Activated CD8-positive, alpha-beta T cell treated with anti-CD3 and anti-CD28 coated beads for 36 hours (primary cell): ENCODE measurements at regions of chr3 and their contacts with region 1.

Region 1: DNA sequence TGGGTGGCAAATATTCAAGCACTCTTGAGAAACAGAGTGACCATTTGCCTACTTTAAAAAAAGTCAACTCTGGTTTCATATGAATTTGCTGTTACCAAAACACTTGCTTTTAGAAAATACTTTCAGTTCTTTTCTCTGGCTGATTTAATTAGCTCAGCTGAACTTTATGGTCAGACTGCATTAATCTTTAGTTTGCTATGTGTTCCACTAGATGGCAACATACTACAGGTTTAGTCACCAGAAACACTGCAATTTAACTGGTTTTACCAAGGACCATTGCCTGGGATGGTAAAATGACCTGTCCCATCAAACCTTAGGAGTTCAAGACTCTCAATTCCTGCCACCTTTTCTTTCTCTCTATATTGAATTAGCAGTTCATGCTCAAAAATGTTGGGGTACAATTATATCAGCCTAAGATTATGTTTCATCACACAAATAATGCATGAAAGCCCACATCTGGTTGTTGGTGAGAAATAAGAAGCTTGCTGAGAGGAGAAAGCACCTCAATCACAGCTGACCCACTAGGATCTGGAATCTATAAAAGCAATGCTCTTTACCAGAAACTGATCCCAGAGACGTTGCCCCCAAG is 14.2 kb downstream of the EIF4E3 start:
- DNase-seq: no peak
- ATAC-seq: peak; percentile 84
- H3K4me3 Mint-ChIP-seq: no peak overlapping the region
- H3K27ac Mint-ChIP-seq: no peak overlapping the region
- H3K4me1 Mint-ChIP-seq: peaks cover 70% of the 10 kb centered on the region
- H3K27me3 Mint-ChIP-seq: no peaks in the 10 kb centered on the region
- CTCF ChIP-seq: peak; percentile 79

Region 2: DNA sequence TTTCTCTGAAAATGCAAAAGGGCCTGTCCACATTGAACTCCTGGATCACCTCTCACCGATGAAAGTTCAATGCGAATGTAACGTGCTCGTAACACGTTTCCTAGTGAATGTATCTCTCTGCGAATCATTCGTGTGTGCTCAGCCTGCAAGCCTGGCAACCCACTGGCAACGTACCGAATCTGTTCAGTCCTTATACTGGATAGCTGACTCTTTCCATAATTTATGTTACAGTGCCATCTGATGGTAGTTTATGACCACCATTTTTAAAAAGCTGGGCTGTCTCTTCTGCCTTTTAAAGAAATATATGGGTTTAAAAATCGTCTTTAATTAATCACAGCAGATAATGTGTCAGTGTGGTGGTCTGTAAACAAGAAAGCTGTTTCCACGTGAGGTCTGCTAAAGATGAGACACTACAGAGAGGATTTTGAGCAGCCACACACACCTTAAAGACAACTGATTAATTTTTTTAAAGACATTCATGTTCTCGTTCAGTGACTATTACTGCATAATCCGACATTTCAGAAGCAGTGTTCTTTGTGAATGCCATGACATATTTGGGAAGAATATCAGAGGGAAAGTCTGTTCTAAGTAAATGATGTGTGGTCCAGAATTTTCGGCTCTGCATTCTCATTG is 58.1 kb before region 1 on chr3:
- CTCF ChIA-PET with region 1: no interaction called
- POLR2A ChIA-PET with region 1: no interaction called
- intact Hi-C with region 1: no loop called
- DNase-seq: peak; percentile 38
- ATAC-seq: peak; percentile 69
- H3K4me3 Mint-ChIP-seq: no peak overlapping the region
- H3K27ac Mint-ChIP-seq: no peak overlapping the region
- H3K4me1 Mint-ChIP-seq: peaks cover 7% of the 10 kb centered on the region
- H3K27me3 Mint-ChIP-seq: no peaks in the 10 kb centered on the region
- CTCF ChIP-seq: peak; percentile 62

Region 3: DNA sequence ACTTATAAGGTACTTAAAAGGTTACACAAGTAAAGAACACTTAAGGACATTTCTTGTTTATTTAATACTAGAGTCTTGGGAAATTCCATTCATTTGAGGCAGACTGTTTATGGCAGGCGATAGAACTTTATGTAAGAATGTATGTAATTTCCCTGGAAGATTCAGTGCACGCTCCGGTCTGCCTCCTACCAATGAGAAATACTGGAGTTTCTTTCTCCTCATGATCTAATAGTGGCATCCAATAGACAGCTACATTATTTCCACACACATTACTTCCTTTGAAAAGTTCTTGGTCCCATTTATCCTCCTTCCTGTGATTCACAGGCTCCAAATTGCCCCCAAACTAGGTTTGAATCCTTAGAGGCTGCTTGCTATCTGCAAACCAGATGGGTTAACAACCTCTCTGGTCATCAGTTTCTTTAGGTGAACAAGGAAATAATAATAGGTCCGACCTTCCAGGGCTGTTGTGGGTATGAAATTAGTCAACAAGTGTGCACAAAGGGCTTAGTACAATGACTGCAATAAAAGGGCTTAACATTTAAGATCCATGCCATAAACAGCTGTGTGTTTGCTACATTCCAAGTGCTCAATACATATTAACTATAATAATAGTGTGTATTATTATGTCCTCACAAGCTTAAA is 16.5 kb before region 1 on chr3:
- CTCF ChIA-PET with region 1: interaction called, 13 read pairs
- POLR2A ChIA-PET with region 1: no interaction called
- intact Hi-C with region 1: no loop called
- DNase-seq: no peak
- ATAC-seq: no peak
- H3K4me3 Mint-ChIP-seq: no peak overlapping the region
- H3K27ac Mint-ChIP-seq: no peak overlapping the region
- H3K4me1 Mint-ChIP-seq: peaks cover 2% of the 10 kb centered on the region
- H3K27me3 Mint-ChIP-seq: no peaks in the 10 kb centered on the region
- CTCF ChIP-seq: no peak

Region 4: DNA sequence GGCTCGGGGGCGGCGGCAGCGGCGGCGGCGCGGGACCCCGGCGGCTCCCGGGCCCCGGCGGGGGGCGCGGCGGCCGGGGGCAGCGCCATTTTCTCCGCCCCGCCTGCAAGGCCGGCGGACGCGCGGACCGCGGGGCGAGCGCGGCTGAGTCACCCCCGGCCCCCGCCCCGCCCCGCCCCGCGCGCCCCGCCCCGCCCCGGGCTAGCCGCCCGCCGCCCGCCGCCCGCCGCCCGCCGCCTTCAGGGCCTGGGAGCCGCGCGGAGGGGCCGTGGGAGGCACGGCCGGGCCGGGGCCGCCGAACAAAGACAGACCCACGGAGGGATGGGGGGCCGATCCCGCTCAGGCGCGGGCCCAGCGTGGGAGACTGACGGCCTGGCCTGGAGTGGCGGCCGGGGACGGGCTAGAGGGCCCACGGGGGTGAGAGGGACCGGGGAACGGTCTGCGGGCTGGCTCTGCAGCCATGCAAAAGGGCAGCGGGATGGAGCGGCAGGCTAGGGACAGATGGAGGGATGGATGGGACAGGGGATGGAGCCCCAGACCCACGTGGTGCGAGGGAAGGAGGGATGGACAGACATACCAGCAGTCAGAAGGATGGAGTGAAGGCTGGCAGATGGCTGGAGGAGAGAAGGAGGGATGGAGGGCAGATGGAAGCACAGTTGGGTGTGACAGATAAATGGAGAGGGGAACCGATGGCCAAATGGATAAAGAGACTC is 14.4 kb after region 1 on chr3 and contains the start of gene EIF4E3:
- CTCF ChIA-PET with region 1: interaction called, 52 read pairs
- POLR2A ChIA-PET with region 1: interaction called, 5 read pairs
- intact Hi-C with region 1: no loop called
- DNase-seq: peak; percentile 31
- ATAC-seq: peak; percentile 43
- H3K4me3 Mint-ChIP-seq: peak within 1 kb of the TSS; percentile 99
- H3K27ac Mint-ChIP-seq: peak within 1 kb of the TSS; percentile 98
- H3K4me1 Mint-ChIP-seq: peaks cover 64% of the 10 kb centered on the region
- H3K27me3 Mint-ChIP-seq: no peaks in the 10 kb centered on the region
- CTCF ChIP-seq: no peak
- total RNA-seq, gene EIF4E3: 29.3 to 30.4 TPM

Region 5: GRCh38 chr3:71859123-71859519 is 148.1 kb after region 1 on chr3:
- CTCF ChIA-PET with region 1: interaction called, 32 read pairs
- POLR2A ChIA-PET with region 1: no interaction called
- intact Hi-C with region 1: loop called (anchors 5 kb)
- DNase-seq: peak; percentile 12
- ATAC-seq: peak; percentile 70
- H3K4me3 Mint-ChIP-seq: no peak overlapping the region
- H3K27ac Mint-ChIP-seq: no peak overlapping the region
- H3K4me1 Mint-ChIP-seq: peaks cover 4% of the 10 kb centered on the region
- H3K27me3 Mint-ChIP-seq: peaks cover 17% of the 10 kb centered on the region
- CTCF ChIP-seq: peak; percentile 57

Region 6: GRCh38 chr3:71875461-71875947 is 164.5 kb after region 1 on chr3:
- CTCF ChIA-PET with region 1: interaction called, 26 read pairs
- POLR2A ChIA-PET with region 1: no interaction called
- intact Hi-C with region 1: no loop called
- DNase-seq: peak; percentile 89
- ATAC-seq: peak; percentile 97
- H3K4me3 Mint-ChIP-seq: no peak overlapping the region
- H3K27ac Mint-ChIP-seq: peak overlapping the region; percentile 73
- H3K4me1 Mint-ChIP-seq: peaks cover 28% of the 10 kb centered on the region
- H3K27me3 Mint-ChIP-seq: peaks cover 4% of the 10 kb centered on the region
- CTCF ChIP-seq: peak; percentile 83